ENCODE measurements at regions of chr11 and their contacts with region 1.

Region 1: DNA sequence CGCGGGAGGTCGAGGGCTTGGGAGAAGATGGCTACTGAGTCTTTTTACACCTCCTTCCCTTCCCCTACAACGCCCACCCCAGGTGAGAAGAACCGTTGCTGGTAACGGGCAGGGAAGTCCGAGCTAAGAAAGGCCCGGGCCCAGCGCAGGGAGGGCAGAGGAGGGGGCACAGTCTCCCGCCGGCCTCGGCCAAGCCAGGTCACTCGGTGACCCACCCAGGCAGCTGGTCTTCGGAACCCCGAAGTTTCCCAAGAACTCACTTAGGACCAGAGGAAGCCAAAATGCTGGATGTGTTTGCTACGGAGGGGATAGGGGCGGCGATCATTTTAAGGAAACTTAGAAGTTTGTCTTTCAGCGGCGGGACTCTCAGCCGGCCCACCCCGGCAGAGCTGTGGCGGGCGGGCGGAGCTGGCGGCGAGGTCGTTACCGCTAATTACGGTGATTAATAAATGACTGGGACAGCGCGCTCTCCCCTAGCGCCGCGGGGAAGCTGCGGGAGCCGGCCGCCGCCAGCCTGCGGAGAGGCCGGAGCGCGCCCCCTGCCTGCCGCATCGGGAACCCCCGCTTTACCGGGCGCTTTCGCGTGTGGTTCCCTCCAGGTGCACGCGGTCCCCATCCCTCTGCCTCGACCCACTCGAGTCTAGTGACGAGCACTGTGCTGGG is 820 bp downstream of the ROBO3 start:
- DNase-seq: peak; percentile 30
- ATAC-seq: peak; percentile 17
- H3K4me3 ChIP-seq: peak overlapping the region; percentile 18; the same call in 1 of the 2 replicates
- H3K27ac ChIP-seq: no peak overlapping the region
- H3K4me1 ChIP-seq: no peaks in the 10 kb centered on the region
- H3K27me3 ChIP-seq: peaks cover 72% of the 10 kb centered on the region
- CTCF ChIP-seq: peak; percentile 74

Region 2: GRCh38 chr11:124644426-124645280 is 221.4 kb before region 1 on chr11:
- CTCF ChIA-PET with region 1: interaction called, 12 read pairs
- POLR2A ChIA-PET with region 1: no interaction called
- intact Hi-C with region 1: loop called (anchors 1 kb)
- DNase-seq: peak; percentile 72
- ATAC-seq: peak; percentile 93
- H3K4me3 ChIP-seq: peak overlapping the region; percentile 57
- H3K27ac ChIP-seq: no peak overlapping the region
- H3K4me1 ChIP-seq: peaks cover 9% of the 10 kb centered on the region; the same call in 1 of the 2 replicates
- H3K27me3 ChIP-seq: no peaks in the 10 kb centered on the region
- CTCF ChIP-seq: peak; percentile 97

Region 3: DNA sequence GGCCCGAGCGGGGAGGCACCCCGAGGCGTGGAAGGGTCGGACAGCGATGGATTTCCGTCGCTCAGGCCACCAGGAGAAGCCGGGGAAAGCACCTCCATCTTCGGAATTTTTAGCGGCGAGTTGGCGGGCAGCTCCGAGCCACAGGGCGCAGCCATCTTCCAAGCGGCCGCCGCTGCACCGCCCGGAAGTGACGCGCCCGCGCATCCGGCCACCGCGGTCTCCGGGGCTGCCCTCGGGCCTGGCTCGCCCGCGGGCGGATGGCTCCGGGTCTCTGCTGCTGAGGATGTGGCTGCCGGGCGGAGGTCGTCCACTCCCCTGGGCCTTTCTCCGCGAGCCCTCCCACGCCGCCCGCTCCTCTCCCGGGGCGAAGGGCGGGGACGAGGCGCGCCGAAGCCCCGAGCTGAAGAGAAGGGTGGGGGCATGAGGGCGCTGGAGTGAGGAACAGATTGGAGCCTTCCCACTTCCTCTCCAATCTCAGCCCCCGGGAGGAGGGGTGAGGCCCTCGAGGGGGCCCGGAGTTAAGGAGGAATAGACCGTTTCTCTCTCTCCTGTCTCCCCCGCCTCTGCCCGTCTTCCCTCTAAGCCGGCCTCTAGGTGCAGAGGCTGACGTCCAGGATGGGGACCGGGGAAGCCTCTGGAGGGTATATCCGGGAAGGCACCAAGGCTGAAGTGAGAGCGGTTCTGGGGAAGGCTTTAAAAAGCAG is 65.7 kb before region 1 on chr11 and contains the start of gene MSANTD2:
- CTCF ChIA-PET with region 1: interaction called, 3 read pairs
- POLR2A ChIA-PET with region 1: no interaction called
- intact Hi-C with region 1: loop called (anchors 2 kb)
- DNase-seq: peak; percentile 76
- ATAC-seq: peak; percentile 77
- H3K4me3 ChIP-seq: peak within 1 kb of the TSS; percentile 70
- H3K27ac ChIP-seq: peak within 1 kb of the TSS; percentile 83
- H3K4me1 ChIP-seq: peaks cover 39% of the 10 kb centered on the region
- H3K27me3 ChIP-seq: no peaks in the 10 kb centered on the region
- CTCF ChIP-seq: no peak
- total RNA-seq, gene MSANTD2: 29.5 and 32.6 TPM in 2 replicates

Region 4: DNA sequence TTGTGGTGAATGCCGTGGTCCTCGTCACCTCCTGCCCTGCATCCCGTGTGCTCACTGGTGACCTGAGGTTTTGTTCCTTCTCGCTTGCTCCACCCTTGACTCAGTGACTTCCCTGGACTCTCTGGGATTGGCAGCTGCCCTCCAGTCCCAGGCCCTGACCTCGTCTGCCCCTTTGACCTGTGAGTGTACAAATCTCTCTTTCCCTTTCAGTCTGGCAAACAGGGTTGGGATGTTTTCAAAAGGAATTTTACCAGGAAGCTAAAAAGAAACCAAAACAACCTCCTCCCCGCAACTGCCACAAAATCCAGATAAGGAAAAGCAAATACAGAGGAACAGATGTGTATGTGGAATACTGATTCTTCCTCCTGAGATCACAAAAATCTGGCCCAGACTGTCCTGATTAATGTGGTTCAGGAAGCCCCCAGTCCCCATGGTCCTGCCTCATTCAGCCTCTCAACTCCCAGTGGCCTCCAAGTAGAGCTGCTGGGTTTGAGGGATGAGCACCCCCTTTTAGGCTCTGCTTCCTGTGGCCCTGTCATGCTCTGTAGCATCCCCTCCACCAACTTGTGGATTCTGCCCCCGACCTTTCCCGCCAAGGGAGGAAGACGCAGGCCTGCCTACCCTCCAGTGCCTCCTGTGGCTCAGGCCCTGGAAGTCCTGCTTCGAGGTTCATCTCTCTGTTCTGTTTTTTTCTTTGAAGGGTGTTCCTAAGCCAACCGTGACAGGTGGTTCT is 16.5 kb after region 1 on chr11:
- CTCF ChIA-PET with region 1: interaction called, 10 read pairs
- POLR2A ChIA-PET with region 1: no interaction called
- intact Hi-C with region 1: no loop called
- DNase-seq: no peak
- ATAC-seq: no peak
- H3K4me3 ChIP-seq: no peak overlapping the region
- H3K27ac ChIP-seq: no peak overlapping the region
- H3K4me1 ChIP-seq: no peaks in the 10 kb centered on the region
- H3K27me3 ChIP-seq: no peaks in the 10 kb centered on the region
- CTCF ChIP-seq: no peak

Measured in PC-3 (cell line).